CD4-positive, alpha-beta T cell (primary cell): ENCODE measurements at regions of chr12 and their contacts with region 1.

Region 1: DNA sequence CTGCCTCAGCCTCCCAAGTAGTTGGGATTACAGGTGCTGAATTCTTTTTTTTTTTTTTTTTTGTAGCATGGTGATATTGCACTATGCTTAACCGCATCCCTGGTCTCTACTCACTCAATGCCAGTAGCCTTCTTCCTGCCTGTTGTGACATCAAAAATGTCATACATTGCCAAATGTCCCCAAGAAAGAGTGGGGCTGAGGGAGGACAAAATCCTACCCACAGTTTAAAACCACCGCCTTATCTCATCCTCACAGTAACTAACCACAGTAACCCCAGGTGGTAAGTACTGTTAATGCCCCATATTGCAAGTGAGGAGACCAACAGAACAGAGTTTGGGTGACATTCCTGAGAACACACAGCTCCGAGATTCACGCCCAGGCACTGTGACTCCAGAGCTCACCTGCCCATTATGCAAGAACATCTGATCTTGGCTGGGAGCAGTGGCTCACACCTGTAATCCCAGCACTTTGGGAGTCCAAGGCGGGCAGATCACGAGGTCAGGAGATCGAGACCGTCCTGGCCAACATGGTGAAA is 19.6 kb downstream of the MORN3 start:
- DNase-seq: peak in 3 of 14 experiments; percentile 68 to 79 (median 77)
- ATAC-seq: peak; percentile 67
- H3K4me3 ChIP-seq: no peak overlapping the region
- H3K4me3 Mint-ChIP-seq: no peak overlapping the region
- H3K27ac ChIP-seq: no peak overlapping the region
- H3K27ac Mint-ChIP-seq: peak overlapping the region; percentile 71
- H3K4me1 ChIP-seq: peaks cover 47% of the 10 kb centered on the region
- H3K4me1 Mint-ChIP-seq: peaks cover 27% of the 10 kb centered on the region
- H3K27me3 ChIP-seq: no peaks in the 10 kb centered on the region
- H3K27me3 Mint-ChIP-seq: no peaks in the 10 kb centered on the region
- CTCF ChIP-seq: no peak

Region 2: DNA sequence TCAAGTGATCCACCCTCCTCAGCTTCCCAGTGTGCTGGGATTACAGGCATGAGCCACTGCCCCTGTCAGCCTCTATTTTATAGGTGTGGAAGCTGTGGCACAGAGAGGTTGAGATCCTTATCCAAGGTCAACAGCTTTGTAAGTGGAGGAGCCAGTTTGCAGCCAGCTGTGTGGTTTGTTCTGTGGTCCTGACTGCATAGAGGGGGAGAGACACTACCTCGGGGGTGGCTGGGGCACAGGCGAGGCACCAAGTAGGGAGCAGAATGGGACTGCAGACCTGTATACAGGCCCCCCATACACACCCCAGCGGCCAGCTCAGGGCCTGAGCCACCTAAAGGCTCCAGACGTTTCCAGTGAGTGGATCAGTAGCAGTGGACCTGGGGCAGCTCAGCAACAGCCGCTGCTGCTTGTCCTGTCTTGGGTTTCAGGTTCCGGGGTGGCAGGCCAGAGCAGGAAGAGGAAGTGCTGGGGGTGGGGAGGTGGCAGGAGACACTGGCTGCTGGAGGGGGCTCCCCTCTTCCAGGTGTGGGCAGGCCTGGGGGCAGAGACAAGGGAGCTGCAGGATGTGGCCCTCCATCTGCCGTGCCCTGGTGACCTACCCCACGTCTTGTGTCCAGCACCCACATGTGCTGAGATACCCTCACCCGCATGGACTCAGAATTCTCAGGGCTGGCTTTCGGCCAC is 12.5 kb before region 1 on chr12:
- CTCF ChIA-PET with region 1: interaction called, 5 read pairs
- POLR2A ChIA-PET with region 1: interaction called, 15 read pairs
- intact Hi-C with region 1: no loop called
- DNase-seq: peak in 13 of 14 experiments; percentile 30 to 83 (median 52)
- ATAC-seq: peak; percentile 77
- H3K4me3 ChIP-seq: peak overlapping the region; percentile 38
- H3K4me3 Mint-ChIP-seq: peak overlapping the region; percentile 72
- H3K27ac ChIP-seq: peak overlapping the region; percentile 74 to 80
- H3K27ac Mint-ChIP-seq: peak overlapping the region; percentile 91
- H3K4me1 ChIP-seq: peaks cover 70% of the 10 kb centered on the region
- H3K4me1 Mint-ChIP-seq: peaks cover 62% of the 10 kb centered on the region
- H3K27me3 ChIP-seq: no peaks in the 10 kb centered on the region
- H3K27me3 Mint-ChIP-seq: no peaks in the 10 kb centered on the region
- CTCF ChIP-seq: no peak